PC-9 (cell line): ENCODE measurements at regions of chr7 and their contacts with region 1.

Region 1: DNA sequence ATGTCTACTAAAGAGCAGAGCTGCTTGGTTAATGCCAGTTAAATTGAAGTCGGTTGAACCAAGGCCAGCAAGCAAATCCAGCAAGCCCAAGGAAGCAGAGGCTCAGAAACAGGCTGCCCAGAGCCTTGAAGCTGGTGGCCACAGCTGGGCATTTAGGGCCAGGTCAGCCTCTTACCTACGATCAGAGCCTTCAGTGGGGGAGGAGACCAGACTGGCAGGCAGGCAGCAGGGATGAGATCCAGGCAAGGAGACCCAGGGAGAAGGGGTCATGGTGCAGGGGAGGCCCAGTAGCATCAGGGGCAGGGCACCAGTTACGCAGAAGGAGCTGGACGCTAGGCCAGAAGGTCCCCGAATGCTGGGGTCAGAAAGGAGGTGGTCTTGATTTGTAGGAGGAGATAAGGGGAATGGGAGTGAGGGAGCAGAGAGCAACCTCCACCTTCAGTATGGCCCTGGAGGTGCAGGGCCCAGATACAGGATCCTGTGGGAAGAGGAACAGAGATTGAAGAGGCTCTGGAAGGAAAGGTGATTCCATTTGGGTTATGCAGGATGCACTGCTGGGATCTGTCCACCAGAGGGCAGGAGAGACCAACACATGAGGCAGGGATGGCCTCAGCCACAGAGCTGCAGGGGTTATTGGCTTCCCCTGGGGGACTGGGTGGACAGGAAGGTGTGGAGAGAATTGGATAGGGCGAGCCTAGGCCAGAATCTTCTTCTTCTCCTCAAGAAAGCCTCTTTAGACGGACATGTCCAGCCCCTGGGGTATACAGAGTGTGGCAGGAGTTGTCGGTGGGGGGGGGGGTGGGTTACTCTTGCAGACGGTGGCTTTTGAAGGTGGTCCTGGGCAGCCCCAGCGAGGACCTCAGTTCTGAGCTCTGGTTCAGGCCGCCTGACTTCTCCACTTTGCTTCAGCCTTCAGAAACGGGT is 132.6 kb upstream of the PODXL start:
- DNase-seq: peak; percentile 43 to 70
- H3K4me3 ChIP-seq: no peak overlapping the region
- H3K27ac ChIP-seq: no peak overlapping the region
- H3K4me1 ChIP-seq: no peaks in the 10 kb centered on the region
- H3K27me3 ChIP-seq: peaks cover 95% of the 10 kb centered on the region
- CTCF ChIP-seq: peak; percentile 98

Region 2: DNA sequence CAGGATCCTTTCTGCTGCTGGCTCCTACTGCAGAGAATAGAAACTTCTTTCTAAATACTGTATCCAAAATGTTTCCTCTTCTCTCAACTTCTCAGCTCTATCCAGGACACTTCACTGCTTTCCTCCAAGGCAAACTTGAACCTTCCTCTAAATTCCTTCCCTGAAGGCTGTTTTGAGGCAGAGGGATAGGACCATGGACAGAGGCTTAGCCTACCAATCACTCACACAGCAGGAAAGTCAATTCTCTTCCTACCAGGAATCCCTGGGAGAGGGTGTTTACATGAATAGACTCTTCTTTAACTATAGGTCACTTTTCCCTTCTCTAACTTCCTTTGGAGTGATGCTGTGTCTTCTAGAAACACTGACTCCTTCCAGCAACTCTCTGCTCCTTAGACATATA is 476.9 kb before region 1 on chr7:
- CTCF ChIA-PET with region 1: no interaction called
- POLR2A ChIA-PET with region 1: no interaction called
- intact Hi-C with region 1: no loop called
- DNase-seq: no peak
- H3K4me3 ChIP-seq: no peak overlapping the region
- H3K27ac ChIP-seq: no peak overlapping the region
- H3K4me1 ChIP-seq: no peaks in the 10 kb centered on the region
- H3K27me3 ChIP-seq: no peaks in the 10 kb centered on the region
- CTCF ChIP-seq: no peak

Region 3: GRCh38 chr7:131723926-131724325 is 34.9 kb after region 1 on chr7:
- CTCF ChIA-PET with region 1: interaction called, 11 read pairs
- POLR2A ChIA-PET with region 1: no interaction called
- intact Hi-C with region 1: no loop called
- DNase-seq: peak in 1 of 2 experiments; percentile 32
- H3K4me3 ChIP-seq: no peak overlapping the region
- H3K27ac ChIP-seq: no peak overlapping the region
- H3K4me1 ChIP-seq: no peaks in the 10 kb centered on the region
- H3K27me3 ChIP-seq: peaks cover 81% of the 10 kb centered on the region
- CTCF ChIP-seq: no peak

Region 4: DNA sequence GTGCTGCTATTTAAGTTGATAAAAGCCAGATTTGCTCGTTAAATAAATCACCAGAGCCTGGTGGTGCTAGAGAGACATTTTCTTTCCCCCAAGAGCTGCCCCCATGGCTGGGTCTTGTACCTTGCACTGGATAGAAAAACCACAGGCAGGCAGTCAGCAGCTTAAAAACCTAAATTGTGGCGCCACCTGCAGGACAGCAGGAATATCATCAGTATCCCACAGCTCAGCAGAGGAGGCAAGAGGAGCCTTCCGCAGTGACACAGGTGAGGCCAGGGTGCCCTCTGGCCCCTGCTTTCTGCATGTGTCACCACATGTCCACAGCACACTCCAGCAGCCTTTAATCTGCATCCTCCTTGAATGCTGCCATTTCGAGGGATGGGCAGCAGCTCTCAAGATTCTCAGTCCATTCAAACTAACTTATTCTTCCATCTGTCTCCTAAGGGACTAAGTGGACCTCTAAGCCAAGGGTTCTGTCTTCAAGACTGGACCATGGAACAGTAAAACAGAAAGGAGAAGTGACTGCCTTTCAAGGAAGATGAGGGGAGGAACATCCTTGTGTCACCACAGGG is 891.8 kb after region 1 on chr7:
- CTCF ChIA-PET with region 1: interaction called, 6 read pairs
- POLR2A ChIA-PET with region 1: no interaction called
- intact Hi-C with region 1: loop called (anchors 1 kb)
- DNase-seq: peak; percentile 47 to 52
- H3K4me3 ChIP-seq: no peak overlapping the region
- H3K27ac ChIP-seq: no peak overlapping the region
- H3K4me1 ChIP-seq: no peaks in the 10 kb centered on the region
- H3K27me3 ChIP-seq: peaks cover 44% of the 10 kb centered on the region; the same call in 1 of the 2 replicates
- CTCF ChIP-seq: peak; percentile 86